Activated CD4-positive, alpha-beta memory T cell treated with anti-CD3 and anti-CD28 coated beads, Interleukin-2, amount 10 ng/mL, durations not matched to agents 7 days and 5 days (primary cell): ENCODE measurements at regions of chr17 and their contacts with region 1.

Region 1: DNA sequence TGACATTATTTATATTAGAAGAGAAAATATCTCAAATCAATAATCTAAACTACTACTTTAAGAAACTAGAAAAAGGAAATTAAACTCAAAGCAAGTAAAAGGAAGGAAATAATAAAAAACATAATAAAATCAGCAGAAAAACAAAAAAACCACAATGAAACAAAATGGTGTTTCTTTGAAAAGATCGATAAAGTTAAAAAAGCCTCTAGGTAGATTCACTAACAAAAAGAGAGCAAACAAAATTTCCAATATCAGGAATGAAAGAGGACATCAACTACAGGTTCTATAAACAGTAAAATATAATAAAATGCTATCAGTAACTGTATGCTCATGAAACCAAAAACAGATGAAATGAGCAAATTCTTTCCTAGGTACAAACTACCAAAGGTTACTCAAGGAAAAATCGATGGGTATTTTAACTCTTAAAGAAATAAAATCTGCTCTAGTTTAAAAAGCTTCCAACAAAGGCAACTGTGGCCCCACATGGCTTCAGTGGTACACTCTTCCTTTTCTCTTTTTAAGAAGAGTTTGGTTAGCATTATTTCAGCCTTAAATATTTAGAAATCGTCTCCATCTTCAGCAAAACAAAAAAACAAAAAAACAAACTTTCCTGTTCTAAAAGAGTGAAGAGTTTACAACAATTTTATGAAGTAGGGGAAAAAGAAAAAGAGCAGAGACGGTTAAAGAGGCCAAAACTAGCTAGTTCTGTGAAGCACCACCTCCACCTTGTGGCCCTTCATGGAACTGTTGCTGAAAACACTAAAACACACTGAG is 102.2 kb downstream of the TRIM37 start:
- DNase-seq: peak; percentile 76
- H3K4me3 Mint-ChIP-seq: no peak overlapping the region
- H3K27ac Mint-ChIP-seq: peak overlapping the region; percentile 0
- H3K4me1 Mint-ChIP-seq: peaks cover 33% of the 10 kb centered on the region
- H3K27me3 Mint-ChIP-seq: no peaks in the 10 kb centered on the region

Region 2: DNA sequence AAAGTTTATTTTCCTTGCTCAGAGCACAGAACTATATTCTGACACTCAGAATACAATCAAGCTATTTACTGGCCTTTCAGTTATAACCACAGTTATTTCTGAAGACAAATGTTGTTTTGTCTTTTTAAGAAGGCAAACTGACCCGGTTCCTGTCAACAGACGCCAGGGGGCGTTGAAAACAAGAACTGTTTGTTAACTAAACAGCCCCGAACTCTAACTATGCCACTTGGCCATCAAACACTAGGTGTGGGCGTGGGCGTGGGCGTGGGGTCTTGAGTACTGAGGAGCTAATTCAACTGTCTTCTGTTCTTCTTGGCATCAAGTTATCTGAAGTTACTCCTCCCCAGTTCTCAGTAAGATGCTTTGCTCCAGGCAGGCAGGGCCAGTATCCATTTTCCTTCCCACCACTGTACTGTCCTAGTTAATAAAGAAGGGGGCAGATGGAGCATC is 426.9 kb before region 1 on chr17:
- CTCF ChIA-PET with region 1: interaction called, 11 read pairs
- POLR2A ChIA-PET with region 1: no interaction called
- DNase-seq: peak; percentile 60
- H3K4me3 Mint-ChIP-seq: no peak overlapping the region
- H3K27ac Mint-ChIP-seq: no peak overlapping the region
- H3K4me1 Mint-ChIP-seq: peaks cover 4% of the 10 kb centered on the region
- H3K27me3 Mint-ChIP-seq: no peaks in the 10 kb centered on the region

Region 3: GRCh38 chr17:58587702-58588254 is 416.7 kb before region 1 on chr17:
- CTCF ChIA-PET with region 1: interaction called, 22 read pairs
- POLR2A ChIA-PET with region 1: interaction called, 3 read pairs
- DNase-seq: peak; percentile 63
- H3K4me3 Mint-ChIP-seq: no peak overlapping the region
- H3K27ac Mint-ChIP-seq: no peak overlapping the region
- H3K4me1 Mint-ChIP-seq: peaks cover 4% of the 10 kb centered on the region
- H3K27me3 Mint-ChIP-seq: peaks cover 2% of the 10 kb centered on the region

Region 4: DNA sequence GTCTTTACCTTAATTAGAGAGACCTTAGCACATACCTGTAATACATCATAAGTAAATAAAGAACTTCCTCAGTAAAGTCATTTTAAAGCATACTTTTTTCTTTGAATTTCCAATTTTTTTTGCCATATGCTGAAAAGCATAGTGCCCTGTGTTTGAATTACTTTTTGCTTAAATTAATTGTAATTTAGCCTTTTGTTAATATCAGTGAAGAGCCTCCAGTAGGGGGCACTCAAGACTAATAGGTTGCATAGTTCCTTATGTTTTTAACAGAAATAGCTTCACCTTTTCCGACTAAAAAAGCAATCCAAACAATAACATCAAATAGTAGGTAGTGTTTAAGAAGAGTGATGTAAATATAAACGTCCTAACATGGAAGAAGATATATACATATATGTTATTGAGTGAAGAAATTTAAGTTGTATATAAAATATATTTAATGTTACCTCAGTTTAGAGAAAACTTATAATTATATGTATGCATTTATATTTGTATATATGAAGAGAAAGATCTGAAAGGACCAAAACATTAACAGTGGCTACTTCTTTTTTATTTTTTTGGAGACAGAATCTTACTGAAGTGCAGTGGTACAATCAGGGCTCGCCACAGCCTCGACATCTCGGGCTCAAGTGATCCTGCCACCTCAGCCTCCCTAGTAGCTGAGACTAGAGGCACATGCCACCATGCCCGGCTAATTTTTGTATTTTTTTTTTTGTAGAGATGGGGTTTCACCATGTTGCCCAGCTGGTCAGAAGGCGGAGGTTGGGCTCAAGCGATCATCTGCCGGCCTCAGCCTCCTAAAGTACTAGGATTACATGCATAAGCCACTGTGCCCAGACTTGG is 293.4 kb before region 1 on chr17:
- CTCF ChIA-PET with region 1: interaction called, 26 read pairs
- POLR2A ChIA-PET with region 1: interaction called, 3 read pairs
- DNase-seq: peak; percentile 23
- H3K4me3 Mint-ChIP-seq: no peak overlapping the region
- H3K27ac Mint-ChIP-seq: no peak overlapping the region
- H3K4me1 Mint-ChIP-seq: peaks cover 15% of the 10 kb centered on the region
- H3K27me3 Mint-ChIP-seq: no peaks in the 10 kb centered on the region

Region 5: DNA sequence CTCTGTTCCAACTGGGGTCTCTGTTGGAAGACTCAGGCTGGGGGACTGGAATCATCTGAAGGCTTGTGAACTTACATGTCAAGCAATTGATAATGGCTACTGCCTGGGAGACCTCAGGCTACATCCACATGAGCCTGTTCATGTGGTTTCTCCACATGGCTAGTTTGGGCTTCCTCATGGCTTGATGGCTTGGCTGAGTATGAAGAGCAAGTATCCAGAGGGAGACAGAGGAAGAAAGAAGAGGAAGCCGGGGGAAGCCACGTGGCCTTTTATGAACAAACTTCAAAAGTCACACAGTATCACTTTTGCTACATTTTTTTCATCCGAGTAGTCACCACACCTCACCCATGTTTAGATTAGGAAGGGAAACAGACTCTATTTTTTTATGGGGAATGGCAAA is 56.7 kb before region 1 on chr17:
- CTCF ChIA-PET with region 1: no interaction called
- POLR2A ChIA-PET with region 1: no interaction called
- DNase-seq: no peak
- H3K4me3 Mint-ChIP-seq: no peak overlapping the region
- H3K27ac Mint-ChIP-seq: no peak overlapping the region
- H3K4me1 Mint-ChIP-seq: no peaks in the 10 kb centered on the region
- H3K27me3 Mint-ChIP-seq: peaks cover 17% of the 10 kb centered on the region